Caco-2 (cell line): ENCODE measurements at regions of chr17 and their contacts with region 1.

Region 1: DNA sequence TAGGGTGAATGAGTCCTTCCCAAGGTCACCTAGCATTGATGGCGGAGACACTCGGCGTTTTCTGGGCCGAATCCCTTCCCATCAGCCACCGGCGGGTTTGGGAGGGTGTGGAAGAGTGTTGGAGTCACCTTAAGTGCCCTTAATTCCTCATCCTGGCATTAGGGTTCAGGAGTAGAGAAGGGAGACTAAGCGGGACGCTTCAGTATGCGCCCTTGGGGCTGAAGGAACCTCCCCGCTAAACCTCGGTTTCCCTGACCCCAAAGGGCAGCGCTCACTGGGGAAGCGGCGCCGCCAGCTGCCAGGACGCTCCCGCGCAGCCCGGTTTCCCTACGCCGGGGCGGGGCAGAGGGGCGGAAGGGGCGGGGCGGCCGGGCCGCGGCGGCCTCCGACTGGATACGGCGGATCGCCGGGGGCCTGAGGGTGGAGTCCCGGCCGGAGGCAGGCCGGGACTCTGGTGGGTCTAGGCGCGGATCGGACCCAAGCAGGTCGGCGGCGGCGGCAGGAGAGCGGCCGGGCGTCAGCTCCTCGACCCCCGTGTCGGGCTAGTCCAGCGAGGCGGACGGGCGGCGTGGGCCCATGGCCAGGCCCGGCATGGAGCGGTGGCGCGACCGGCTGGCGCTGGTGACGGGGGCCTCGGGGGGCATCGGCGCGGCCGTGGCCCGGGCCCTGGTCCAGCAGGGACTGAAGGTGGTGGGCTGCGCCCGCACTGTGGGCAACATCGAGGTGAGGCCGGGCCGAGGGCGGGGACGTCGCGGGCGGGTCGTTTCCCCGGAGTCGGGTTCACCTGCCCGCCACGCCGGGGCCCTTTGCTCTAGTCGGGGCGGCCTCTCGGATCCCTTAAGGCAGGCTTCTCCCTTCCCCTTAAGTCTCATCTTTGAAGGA is at the start of gene DHRS11:
- DNase-seq: peak; percentile 86 to 91
- H3K4me3 ChIP-seq: peak within 1 kb of the TSS; percentile 96
- H3K4me3 Mint-ChIP-seq: peak within 1 kb of the TSS; percentile 86
- H3K27ac Mint-ChIP-seq: peak within 1 kb of the TSS; percentile 91
- H3K4me1 ChIP-seq: peaks cover 27% of the 10 kb centered on the region
- H3K4me1 Mint-ChIP-seq: peaks cover 24% of the 10 kb centered on the region
- H3K27me3 ChIP-seq: no peaks in the 10 kb centered on the region
- H3K27me3 Mint-ChIP-seq: no peaks in the 10 kb centered on the region
- CTCF ChIP-seq: peak in 1 of 2 experiments; percentile 17
- total RNA-seq, gene DHRS11: 44.7 and 46.9 TPM in 2 replicates

Region 2: GRCh38 chr17:36493956-36494355 is 97.7 kb before region 1 on chr17:
- CTCF ChIA-PET with region 1: no interaction called
- POLR2A ChIA-PET with region 1: no interaction called
- intact Hi-C with region 1: no loop called
- DNase-seq: no peak
- H3K4me3 ChIP-seq: no peak overlapping the region
- H3K4me3 Mint-ChIP-seq: no peak overlapping the region
- H3K27ac Mint-ChIP-seq: no peak overlapping the region
- H3K4me1 ChIP-seq: no peaks in the 10 kb centered on the region
- H3K4me1 Mint-ChIP-seq: peaks cover 5% of the 10 kb centered on the region
- H3K27me3 ChIP-seq: no peaks in the 10 kb centered on the region
- H3K27me3 Mint-ChIP-seq: no peaks in the 10 kb centered on the region
- CTCF ChIP-seq: no peak

Region 3: DNA sequence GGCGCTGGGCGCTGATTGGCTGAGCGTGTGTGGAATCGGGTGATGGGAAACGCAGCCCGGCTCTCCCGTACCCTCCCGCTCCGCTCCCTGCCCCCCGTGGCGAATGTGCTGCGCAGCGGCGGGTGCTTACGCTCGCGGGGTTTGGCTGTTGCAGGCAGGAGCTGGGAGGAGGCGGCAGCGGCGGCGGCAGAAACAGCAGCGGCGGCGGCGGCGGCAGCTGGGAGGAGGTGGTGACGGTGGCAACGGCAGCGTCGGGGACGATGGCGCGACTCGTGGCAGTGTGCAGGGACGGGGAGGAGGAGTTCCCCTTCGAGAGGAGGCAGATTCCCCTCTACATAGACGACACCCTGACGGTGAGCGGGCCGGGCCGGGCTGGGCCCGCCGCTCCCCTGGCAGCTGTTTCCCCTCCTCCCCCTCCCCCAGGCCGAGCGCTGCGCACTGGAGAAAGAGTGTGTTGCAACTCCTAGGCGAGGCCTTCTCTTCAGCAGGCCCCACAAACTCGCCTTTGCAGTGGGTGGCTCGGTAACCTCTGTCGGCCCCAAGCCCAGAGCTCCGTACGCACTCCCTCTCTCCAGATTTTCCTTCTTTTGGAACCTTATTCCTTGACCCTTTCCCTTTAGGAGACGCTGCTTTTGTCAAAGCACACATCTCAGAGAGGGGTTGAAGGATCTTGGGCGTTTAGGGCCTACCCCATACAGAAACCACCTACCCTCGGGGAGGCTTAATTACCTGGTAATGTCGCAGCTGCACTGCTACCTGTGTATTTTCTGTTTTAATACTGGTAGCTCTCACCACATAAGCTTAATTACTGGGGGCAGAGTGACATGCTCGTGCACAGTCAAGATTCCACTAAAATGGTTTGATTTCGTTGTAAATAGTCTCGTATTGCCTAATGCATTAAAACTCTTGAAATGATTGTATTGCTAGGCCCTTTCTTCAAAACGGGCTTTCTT is 45.9 kb before region 1 on chr17:
- CTCF ChIA-PET with region 1: no interaction called
- POLR2A ChIA-PET with region 1: interaction called, 19 read pairs
- intact Hi-C with region 1: loop called (anchors 5 kb)
- DNase-seq: peak; percentile 99
- H3K4me3 ChIP-seq: peak overlapping the region; percentile 51
- H3K4me3 Mint-ChIP-seq: peak overlapping the region; percentile 92
- H3K27ac Mint-ChIP-seq: peak overlapping the region; percentile 97
- H3K4me1 ChIP-seq: peaks cover 23% of the 10 kb centered on the region
- H3K4me1 Mint-ChIP-seq: peaks cover 13% of the 10 kb centered on the region
- H3K27me3 ChIP-seq: no peaks in the 10 kb centered on the region
- H3K27me3 Mint-ChIP-seq: no peaks in the 10 kb centered on the region
- CTCF ChIP-seq: no peak

Region 4: DNA sequence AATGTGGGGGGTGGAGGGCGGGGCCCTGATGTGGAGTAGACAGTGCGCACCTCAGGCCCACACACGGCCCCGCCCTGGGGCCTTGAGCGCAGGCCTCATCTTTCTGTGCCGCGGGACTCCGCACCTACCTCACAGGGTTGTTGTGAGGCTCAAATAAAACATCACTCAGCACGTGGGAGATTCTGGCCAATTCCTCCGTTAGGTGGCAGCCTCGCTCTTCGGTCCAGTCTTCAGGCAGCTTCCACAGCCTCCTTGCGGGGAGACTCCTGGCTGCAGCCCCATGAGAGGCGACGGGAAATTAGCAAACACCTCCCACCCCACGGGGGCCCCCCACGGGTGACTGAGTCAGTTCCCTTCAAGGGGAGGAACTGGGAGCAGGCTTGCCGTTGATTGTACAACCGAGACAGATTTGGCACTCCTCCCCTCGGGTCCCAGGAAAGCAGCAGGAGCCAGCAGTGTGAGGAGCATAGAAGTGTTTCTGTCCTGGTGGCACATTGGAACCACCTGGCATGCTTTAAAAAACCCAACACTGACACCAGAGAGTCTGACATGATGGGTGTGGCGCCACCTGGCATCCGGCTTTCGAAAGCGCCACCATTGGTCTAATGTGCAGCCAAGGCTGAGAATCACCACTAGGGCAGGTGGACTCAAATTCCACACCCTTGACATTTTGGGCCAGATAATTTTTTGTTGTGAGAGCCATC is 17.3 kb after region 1 on chr17:
- CTCF ChIA-PET with region 1: no interaction called
- POLR2A ChIA-PET with region 1: no interaction called
- intact Hi-C with region 1: no loop called
- DNase-seq: peak in 1 of 2 experiments; percentile 47
- H3K4me3 ChIP-seq: no peak overlapping the region
- H3K4me3 Mint-ChIP-seq: no peak overlapping the region
- H3K27ac Mint-ChIP-seq: no peak overlapping the region
- H3K4me1 ChIP-seq: no peaks in the 10 kb centered on the region
- H3K4me1 Mint-ChIP-seq: peaks cover 5% of the 10 kb centered on the region
- H3K27me3 ChIP-seq: no peaks in the 10 kb centered on the region
- H3K27me3 Mint-ChIP-seq: no peaks in the 10 kb centered on the region
- CTCF ChIP-seq: peak; percentile 40 to 42

Region 5: DNA sequence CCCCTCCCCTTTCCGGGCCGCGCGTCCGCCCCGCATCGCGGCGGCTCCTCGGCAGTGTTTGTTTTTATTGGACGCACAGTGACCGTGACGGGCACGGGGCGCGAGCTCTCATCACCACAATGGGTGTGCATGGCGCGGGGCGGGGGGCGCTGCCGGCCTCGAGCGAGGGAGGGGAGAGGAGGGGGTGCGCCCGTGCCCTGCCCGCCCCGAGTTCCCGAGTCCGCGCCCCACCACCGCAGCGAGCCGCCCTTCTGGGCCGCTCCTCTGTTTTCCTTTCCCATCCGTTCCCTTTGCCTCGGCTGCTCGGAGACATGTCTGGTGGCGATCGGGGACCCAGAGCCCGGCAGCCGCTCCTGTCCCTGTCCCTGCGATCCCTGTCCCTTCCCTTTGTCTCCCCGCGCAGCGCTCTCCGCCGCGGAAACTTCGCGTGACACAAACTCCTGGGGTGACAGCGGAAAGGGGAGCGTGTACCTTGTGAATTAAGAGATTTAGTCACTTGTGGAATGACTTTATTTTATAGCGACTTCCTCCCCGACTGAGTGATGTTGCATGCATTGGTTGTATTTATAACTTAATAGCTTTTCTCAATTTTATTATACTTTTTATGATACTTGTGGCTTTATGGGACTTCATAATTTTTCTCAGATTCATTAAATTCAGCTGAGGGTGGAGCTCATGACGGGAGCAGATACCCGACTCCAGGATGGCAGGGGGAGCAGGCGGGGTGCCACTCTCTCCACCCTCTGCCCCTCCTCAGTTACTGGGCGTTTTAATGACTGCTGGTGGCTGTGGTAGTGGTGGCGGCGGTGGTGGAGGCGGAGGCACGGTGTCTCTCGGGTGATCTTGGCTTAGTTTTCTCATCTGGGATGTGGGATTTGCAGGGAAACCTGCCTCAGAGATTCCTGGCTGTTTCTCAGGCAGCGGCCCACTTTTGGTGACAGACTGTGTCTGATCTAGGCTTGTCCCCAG is 50.5 kb after region 1 on chr17:
- CTCF ChIA-PET with region 1: interaction called, 10 read pairs
- POLR2A ChIA-PET with region 1: no interaction called
- intact Hi-C with region 1: no loop called
- DNase-seq: no peak
- H3K4me3 ChIP-seq: 0 out of 2 replicates have a peak overlapping the region, but pooled peaks have one; percentile 9
- H3K4me3 Mint-ChIP-seq: peak overlapping the region; percentile 72
- H3K27ac Mint-ChIP-seq: no peak overlapping the region
- H3K4me1 ChIP-seq: peaks cover 9% of the 10 kb centered on the region
- H3K4me1 Mint-ChIP-seq: no peaks in the 10 kb centered on the region
- H3K27me3 ChIP-seq: peaks cover 2% of the 10 kb centered on the region; the same call in 1 of the 2 replicates
- H3K27me3 Mint-ChIP-seq: peaks cover 58% of the 10 kb centered on the region
- CTCF ChIP-seq: no peak